Dorsolateral prefrontal cortex (tissue), 120 donors: ENCODE measurements at regions of chrX and their contacts with region 1.

Region 1: DNA sequence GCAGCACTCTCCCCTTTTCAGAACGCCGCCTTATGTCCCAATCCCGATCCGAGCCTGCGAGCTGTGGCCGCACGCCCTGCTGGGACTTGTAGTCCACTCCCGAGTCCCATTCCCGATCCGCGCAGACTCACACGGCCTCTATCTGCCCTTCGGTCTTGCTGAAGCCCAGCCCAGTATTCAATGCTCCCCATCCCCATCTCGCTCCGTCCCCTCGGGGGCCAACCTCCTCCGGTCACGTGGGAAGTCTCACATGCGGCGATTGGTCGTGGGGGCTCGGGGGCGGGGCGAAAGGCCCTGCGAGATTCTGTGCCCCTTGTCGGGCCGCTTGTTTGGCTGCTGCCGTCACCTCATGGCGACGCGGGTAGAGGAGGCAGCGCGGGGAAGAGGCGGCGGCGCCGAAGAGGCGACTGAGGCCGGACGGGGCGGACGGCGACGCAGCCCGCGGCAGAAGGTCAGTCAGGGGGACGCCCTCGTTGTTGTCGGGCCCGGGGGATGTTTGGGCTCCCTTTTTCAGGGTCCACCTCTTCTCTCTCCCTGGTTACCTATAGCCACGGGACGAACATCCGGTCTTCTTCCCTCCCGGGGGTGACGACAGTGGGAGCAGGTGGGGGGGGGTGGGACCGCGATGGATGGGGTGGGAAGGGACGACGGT is at the start of gene TXLNG:
- DNase-seq: peak; percentile 99 to 100 (median 100)
- H3K4me3 ChIP-seq: peak within 1 kb of the TSS; percentile 43 to 92 (median 77)
- H3K27ac ChIP-seq: peak within 1 kb of the TSS in 53 of 59 donors; percentile 9 to 92 (median 79)
- H3K27me3 ChIP-seq: peaks cover 0 to 8% (median 0%) of the 10 kb centered on the region in 45 donors
- CTCF ChIP-seq: peak in 17 of 56 donors; percentile 12 to 55 (median 29)
- total RNA-seq, gene TXLNG: 10.9 to 20.8 (median 16.2) TPM

Region 2: GRCh38 chrX:16719334-16720084 is 66.8 kb before region 1 on chrX and contains the start of gene SYAP1:
- intact Hi-C with region 1: loop called in 1 of 2 experiments (anchors 2 kb)
- DNase-seq: peak; percentile 96 to 99 (median 97)
- H3K4me3 ChIP-seq: peak within 1 kb of the TSS; percentile 47 to 95 (median 81)
- H3K27ac ChIP-seq: peak within 1 kb of the TSS; percentile 53 to 95 (median 89)
- H3K27me3 ChIP-seq: peaks cover 0 to 16% (median 0%) of the 10 kb centered on the region in 45 donors
- CTCF ChIP-seq: peak in 11 of 56 donors; percentile 4 to 42 (median 10)
- total RNA-seq, gene SYAP1: 13.0 to 30.2 (median 19.5) TPM

Region 3: GRCh38 chrX:16843208-16843909 is 57.1 kb after region 1 on chrX:
- intact Hi-C with region 1: no loop called
- DNase-seq: no peak
- H3K4me3 ChIP-seq: no peak overlapping the region
- H3K27ac ChIP-seq: peak overlapping the region in 40 of 59 donors; percentile 7 to 75 (median 45)
- H3K27me3 ChIP-seq: peaks cover 0 to 27% (median 0%) of the 10 kb centered on the region in 45 donors
- CTCF ChIP-seq: no peak